ENCODE measurements at regions of chr3 and their contacts with region 1.

Region 1: DNA sequence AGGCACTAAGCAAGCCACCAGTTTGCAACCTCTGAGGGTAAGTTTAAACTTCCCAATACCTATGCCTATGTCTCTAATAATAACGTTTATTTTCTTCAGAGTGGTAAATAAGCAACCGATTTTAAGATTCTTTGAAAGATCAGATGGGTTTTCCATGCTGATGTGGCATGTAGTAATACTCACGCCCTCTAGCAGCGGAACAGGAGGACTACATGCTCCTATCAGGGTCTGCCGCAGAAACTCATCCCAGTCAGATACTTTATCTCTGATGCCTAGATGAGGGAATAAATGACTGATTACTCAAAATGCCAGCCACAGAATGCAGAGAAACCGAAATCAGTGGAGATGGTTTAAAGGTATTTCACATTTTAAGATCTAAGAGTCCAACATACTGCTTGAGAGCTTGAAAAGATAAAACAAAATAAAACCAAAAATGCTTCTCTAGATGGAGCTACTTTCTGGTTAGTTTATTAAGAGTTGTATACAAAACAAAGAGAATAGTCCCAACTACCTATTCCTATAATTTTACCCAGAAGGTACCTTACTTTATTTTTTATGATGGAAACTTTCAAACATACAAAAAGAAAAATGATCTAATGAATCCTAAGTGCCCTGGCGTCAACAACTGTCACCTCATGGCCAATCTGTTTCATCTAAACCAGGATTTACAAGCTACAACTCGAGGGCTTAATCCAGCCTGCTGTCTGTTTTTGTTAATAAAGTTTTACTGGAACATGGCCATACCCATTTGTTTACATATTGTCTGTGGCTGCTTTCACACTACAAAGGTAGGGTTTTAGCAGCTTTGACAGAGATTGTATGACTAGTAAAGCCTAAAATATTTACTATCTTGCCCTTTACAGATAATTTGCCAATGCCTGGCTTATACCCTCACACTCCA is 37.5 kb upstream of the STIMATE start:
- DNase-seq: peak; percentile 31 to 35
- ATAC-seq: peak; percentile 84 to 94
- H3K4me3 ChIP-seq: no peak overlapping the region
- H3K27ac ChIP-seq: no peak overlapping the region
- H3K4me1 ChIP-seq: no peaks in the 10 kb centered on the region
- H3K27me3 ChIP-seq: no peaks in the 10 kb centered on the region
- CTCF ChIP-seq: peak; percentile 55 to 81 (median 68)
- POLR2A ChIP-seq: no peak

Region 2: GRCh38 chr3:52907497-52907896 is 27.4 kb before region 1 on chr3:
- in situ Hi-C with region 1: no loop called
- intact Hi-C with region 1: no loop called
- DNase-seq: no peak
- ATAC-seq: no peak
- H3K4me3 ChIP-seq: no peak overlapping the region
- H3K27ac ChIP-seq: no peak overlapping the region
- H3K4me1 ChIP-seq: no peaks in the 10 kb centered on the region
- H3K27me3 ChIP-seq: no peaks in the 10 kb centered on the region
- CTCF ChIP-seq: no peak
- POLR2A ChIP-seq: no peak

Region 3: GRCh38 chr3:52986938-52987337 is 52.1 kb after region 1 on chr3:
- in situ Hi-C with region 1: no loop called
- intact Hi-C with region 1: loop called (anchors 2 kb)
- DNase-seq: no peak
- ATAC-seq: peak; percentile 58 to 71
- H3K4me3 ChIP-seq: no peak overlapping the region
- H3K27ac ChIP-seq: no peak overlapping the region
- H3K4me1 ChIP-seq: peaks cover 6 to 26% of the 10 kb centered on the region in 2 donors
- H3K27me3 ChIP-seq: no peaks in the 10 kb centered on the region
- CTCF ChIP-seq: peak in 3 of 5 experiments; percentile 37 to 47 (median 38)
- POLR2A ChIP-seq: no peak

Region 4: GRCh38 chr3:53072653-53073552 is 138.0 kb after region 1 on chr3:
- in situ Hi-C with region 1: loop called in 2 of 4 experiments (anchors 10 kb)
- intact Hi-C with region 1: loop called (anchors 5 kb)
- DNase-seq: peak; percentile 50 to 70
- ATAC-seq: peak; percentile 86 to 93
- H3K4me3 ChIP-seq: peak overlapping the region; percentile 63 to 91 (median 70)
- H3K27ac ChIP-seq: peak overlapping the region; percentile 51 to 80 (median 64)
- H3K4me1 ChIP-seq: peaks cover 8 to 9% of the 10 kb centered on the region in 2 donors
- H3K27me3 ChIP-seq: no peaks in the 10 kb centered on the region
- CTCF ChIP-seq: peak; percentile 86 to 95 (median 93)
- POLR2A ChIP-seq: no peak

Measured in gastrocnemius medialis (tissue), 4 donors.